PC-9 (cell line): ENCODE measurements at regions of chr11 and their contacts with region 1.

Region 1: GRCh38 chr11:47905481-47906059 is 57.4 kb upstream of the NUP160 start:
- DNase-seq: peak; percentile 69 to 91
- H3K4me3 ChIP-seq: no peak overlapping the region
- H3K27ac ChIP-seq: peak overlapping the region; percentile 38; the same call in 1 of the 2 replicates
- H3K4me1 ChIP-seq: peaks cover 6% of the 10 kb centered on the region
- H3K27me3 ChIP-seq: no peaks in the 10 kb centered on the region
- CTCF ChIP-seq: no peak

Region 2: DNA sequence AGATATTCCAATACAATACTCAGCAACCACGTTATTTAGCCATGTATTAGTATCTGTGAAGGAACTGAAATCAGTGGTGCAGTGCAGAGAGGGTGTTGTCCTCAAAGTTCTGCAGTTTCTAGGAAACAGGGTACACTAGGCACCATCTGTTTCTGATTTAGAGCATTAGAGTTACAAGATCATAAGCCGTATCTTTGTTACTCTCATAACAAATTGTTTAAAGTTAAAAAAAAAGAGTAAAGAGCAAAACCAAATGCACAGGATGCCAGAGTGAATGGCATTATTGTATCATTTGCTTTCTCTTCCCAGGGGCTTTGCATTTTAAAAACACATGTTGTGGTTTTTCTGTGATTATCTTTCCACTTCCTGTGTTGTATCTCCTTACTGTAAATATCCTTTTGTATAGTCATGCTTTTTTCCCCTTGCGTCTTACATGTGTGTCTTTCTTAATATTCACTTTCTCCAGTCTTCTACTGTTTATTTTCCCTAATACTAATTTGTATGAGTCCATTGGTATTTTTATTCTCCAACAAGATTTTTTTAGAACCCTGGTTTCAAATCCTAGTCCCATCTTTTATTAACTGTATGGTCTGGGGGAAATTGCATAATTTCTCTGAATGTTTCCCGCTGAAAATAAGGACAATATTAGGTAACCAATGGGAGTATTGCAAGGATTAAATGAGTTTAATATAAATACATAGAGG is 42.2 kb before region 1 on chr11:
- CTCF ChIA-PET with region 1: interaction called, 6 read pairs
- POLR2A ChIA-PET with region 1: interaction called, 29 read pairs
- intact Hi-C with region 1: no loop called
- DNase-seq: no peak
- H3K4me3 ChIP-seq: no peak overlapping the region
- H3K27ac ChIP-seq: no peak overlapping the region
- H3K4me1 ChIP-seq: peaks cover 16% of the 10 kb centered on the region
- H3K27me3 ChIP-seq: no peaks in the 10 kb centered on the region
- CTCF ChIP-seq: no peak

Region 3: GRCh38 chr11:47917643-47918369 is 12.2 kb after region 1 on chr11:
- CTCF ChIA-PET with region 1: no interaction called
- POLR2A ChIA-PET with region 1: no interaction called
- intact Hi-C with region 1: loop called (anchors 1 kb)
- DNase-seq: peak; percentile 50 to 92
- H3K4me3 ChIP-seq: no peak overlapping the region
- H3K27ac ChIP-seq: no peak overlapping the region
- H3K4me1 ChIP-seq: peaks cover 41% of the 10 kb centered on the region
- H3K27me3 ChIP-seq: no peaks in the 10 kb centered on the region
- CTCF ChIP-seq: no peak